ENCODE measurements at regions of chr22 and their contacts with region 1.

Region 1: GRCh38 chr22:37817705-37818408 is 5.3 kb upstream of the GALR3 start:
- H3K4me3 ChIP-seq: peak overlapping the region; percentile 13
- H3K27ac ChIP-seq: peak overlapping the region; percentile 88
- H3K4me1 ChIP-seq: peaks cover 3% of the 10 kb centered on the region; the same call in 1 of the 2 replicates
- CTCF ChIP-seq: peak; percentile 98

Region 2: GRCh38 chr22:37832022-37832857 is 14.4 kb after region 1 on chr22:
- CTCF ChIA-PET with region 1: interaction called, 30 read pairs
- POLR2A ChIA-PET with region 1: interaction called, 10 read pairs
- H3K4me3 ChIP-seq: no peak overlapping the region
- H3K27ac ChIP-seq: no peak overlapping the region
- H3K4me1 ChIP-seq: no peaks in the 10 kb centered on the region
- CTCF ChIP-seq: no peak

Region 3: DNA sequence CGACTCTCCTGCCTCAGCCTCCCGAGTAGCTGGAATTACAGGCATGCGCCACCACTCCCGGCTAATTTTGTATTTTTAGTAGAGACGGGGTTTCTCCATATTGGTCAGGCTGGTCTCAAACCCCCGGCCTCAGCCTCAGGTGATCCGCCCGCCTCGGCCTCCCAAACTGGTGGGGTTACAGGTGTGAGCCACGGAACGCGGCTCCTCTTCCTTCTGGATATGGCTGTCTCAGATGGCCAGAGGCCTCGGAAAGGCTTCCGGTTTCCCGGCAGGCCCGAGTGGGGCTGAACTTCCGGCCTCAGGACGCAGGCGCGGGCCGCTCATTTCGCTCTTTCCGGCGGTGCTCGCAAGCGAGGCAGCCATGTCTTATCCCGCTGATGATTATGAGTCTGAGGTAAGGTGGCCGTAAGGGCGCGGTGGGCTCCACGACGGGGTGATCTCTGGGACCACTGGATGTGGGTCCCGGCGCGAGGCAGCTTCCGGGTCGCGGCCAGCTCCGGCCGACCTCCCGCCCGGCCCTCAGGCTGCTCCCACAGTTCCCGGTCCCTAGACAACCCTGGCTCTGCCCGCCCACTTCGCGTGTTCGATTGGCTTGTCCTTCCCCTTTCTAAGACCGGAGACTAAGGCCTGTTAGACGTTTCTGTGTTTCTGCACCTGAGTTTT is 31.4 kb after region 1 on chr22 and contains the start of gene EIF3L:
- CTCF ChIA-PET with region 1: interaction called, 15 read pairs
- POLR2A ChIA-PET with region 1: interaction called, 12 read pairs
- H3K4me3 ChIP-seq: peak within 1 kb of the TSS; percentile 82
- H3K27ac ChIP-seq: peak within 1 kb of the TSS; percentile 75
- H3K4me1 ChIP-seq: peaks cover 2% of the 10 kb centered on the region; the same call in 1 of the 2 replicates
- CTCF ChIP-seq: no peak

Region 4: DNA sequence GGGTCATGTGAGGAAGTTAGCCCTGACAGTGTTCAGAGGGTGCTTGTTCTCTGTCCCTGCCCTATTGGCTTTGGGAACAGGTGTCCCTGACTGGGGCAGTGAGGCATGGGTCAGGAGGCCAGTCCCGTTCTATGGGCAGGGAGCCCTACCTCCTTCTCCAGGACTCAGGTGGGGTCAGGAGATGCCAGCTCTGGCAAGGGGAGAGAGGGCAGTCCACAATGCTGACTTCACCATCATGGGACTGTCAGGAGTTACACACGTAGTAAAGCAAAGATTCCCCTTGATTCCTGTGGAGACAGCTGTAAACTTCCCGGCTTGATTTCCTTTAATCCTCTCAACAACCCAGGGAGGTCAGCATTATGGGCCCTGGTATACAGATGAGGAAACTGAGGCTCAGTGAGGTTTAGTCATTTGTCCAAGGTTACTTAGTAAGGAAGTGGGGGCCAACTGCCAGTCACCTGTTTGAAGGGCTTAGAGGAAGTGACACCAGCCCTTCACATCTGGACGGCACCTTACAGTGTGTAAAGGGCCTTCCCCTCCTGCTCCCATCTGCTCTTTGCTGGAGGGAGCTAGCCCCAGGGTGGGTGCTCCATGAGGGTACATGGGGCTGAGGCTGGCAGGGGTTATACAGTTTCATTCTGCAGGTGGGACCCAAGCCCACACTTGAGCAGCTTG is 100.2 kb after region 1 on chr22:
- CTCF ChIA-PET with region 1: no interaction called
- POLR2A ChIA-PET with region 1: interaction called, 10 read pairs
- H3K4me3 ChIP-seq: no peak overlapping the region
- H3K27ac ChIP-seq: no peak overlapping the region
- H3K4me1 ChIP-seq: no peaks in the 10 kb centered on the region
- CTCF ChIP-seq: no peak

Region 5: GRCh38 chr22:37965940-37966664 is 148.2 kb after region 1 on chr22:
- CTCF ChIA-PET with region 1: interaction called, 35 read pairs
- POLR2A ChIA-PET with region 1: no interaction called
- H3K4me3 ChIP-seq: no peak overlapping the region
- H3K27ac ChIP-seq: no peak overlapping the region
- H3K4me1 ChIP-seq: no peaks in the 10 kb centered on the region
- CTCF ChIP-seq: no peak

Measured in HEK293 (cell line).